Activated CD4-positive, alpha-beta T cell treated with anti-CD3 and anti-CD28 coated beads, Interleukin-2, amount 10 ng/mL, durations not matched to agents 24 days and 14 days (primary cell): ENCODE measurements at regions of chr20 and their contacts with region 1.

Region 1: GRCh38 chr20:49338061-49338460 is 60.2 kb upstream of the ZNFX1 start:
- DNase-seq: no peak
- H3K4me3 Mint-ChIP-seq: no peak overlapping the region
- H3K27ac Mint-ChIP-seq: no peak overlapping the region
- H3K4me1 Mint-ChIP-seq: peaks cover 3% of the 10 kb centered on the region
- H3K27me3 Mint-ChIP-seq: peaks cover 11% of the 10 kb centered on the region

Region 2: GRCh38 chr20:49054056-49054643 is 283.9 kb before region 1 on chr20:
- intact Hi-C with region 1: no loop called
- DNase-seq: no peak
- H3K4me3 Mint-ChIP-seq: no peak overlapping the region
- H3K27ac Mint-ChIP-seq: peak overlapping the region; percentile 56
- H3K4me1 Mint-ChIP-seq: peaks cover 27% of the 10 kb centered on the region
- H3K27me3 Mint-ChIP-seq: no peaks in the 10 kb centered on the region

Region 3: GRCh38 chr20:49484180-49485140 is 146.4 kb after region 1 on chr20:
- intact Hi-C with region 1: loop called (anchors 1 kb)
- DNase-seq: peak; percentile 92
- H3K4me3 Mint-ChIP-seq: peak overlapping the region; percentile 86
- H3K27ac Mint-ChIP-seq: no peak overlapping the region
- H3K4me1 Mint-ChIP-seq: peaks cover 9% of the 10 kb centered on the region
- H3K27me3 Mint-ChIP-seq: peaks cover 62% of the 10 kb centered on the region

Region 4: DNA sequence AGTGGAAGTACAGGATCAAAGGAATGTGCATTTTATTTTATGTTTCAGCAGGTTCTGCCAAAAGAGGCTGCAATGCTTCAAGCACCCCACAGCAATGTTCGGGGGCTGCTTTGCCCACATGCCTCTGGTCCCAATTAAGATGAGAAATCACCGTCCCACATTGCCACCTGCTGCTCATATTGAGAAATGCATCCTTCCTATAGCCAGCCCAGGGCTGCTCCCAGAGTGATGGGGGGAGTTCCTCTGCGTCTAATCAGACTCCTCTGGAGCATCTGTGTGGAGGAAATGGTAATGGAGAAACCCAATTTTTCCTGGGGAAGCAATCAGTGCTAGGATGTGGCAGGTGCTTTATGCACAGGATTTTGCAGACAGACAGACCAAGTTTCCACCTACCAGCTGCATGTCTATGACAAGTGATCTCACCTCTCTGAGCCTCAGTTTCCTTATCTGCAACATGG is 196.2 kb after region 1 on chr20:
- intact Hi-C with region 1: loop called (anchors 1 kb)
- DNase-seq: peak; percentile 91
- H3K4me3 Mint-ChIP-seq: peak overlapping the region; percentile 25
- H3K27ac Mint-ChIP-seq: peak overlapping the region; percentile 89
- H3K4me1 Mint-ChIP-seq: peaks cover 24% of the 10 kb centered on the region
- H3K27me3 Mint-ChIP-seq: peaks cover 9% of the 10 kb centered on the region

Region 5: GRCh38 chr20:49545572-49545971 is 207.5 kb after region 1 on chr20:
- intact Hi-C with region 1: no loop called
- DNase-seq: no peak
- H3K4me3 Mint-ChIP-seq: no peak overlapping the region
- H3K27ac Mint-ChIP-seq: no peak overlapping the region
- H3K4me1 Mint-ChIP-seq: peaks cover 30% of the 10 kb centered on the region
- H3K27me3 Mint-ChIP-seq: no peaks in the 10 kb centered on the region

Region 6: GRCh38 chr20:49928401-49929141 is 590.5 kb after region 1 on chr20:
- intact Hi-C with region 1: loop called (anchors 2 kb)
- DNase-seq: peak; percentile 93
- H3K4me3 Mint-ChIP-seq: no peak overlapping the region
- H3K27ac Mint-ChIP-seq: peak overlapping the region; percentile 28
- H3K4me1 Mint-ChIP-seq: peaks cover 3% of the 10 kb centered on the region
- H3K27me3 Mint-ChIP-seq: peaks cover 2% of the 10 kb centered on the region